ENCODE measurements at regions of chr18 and their contacts with region 1.

Region 1: GRCh38 chr18:59823596-59824195 is 76.1 kb upstream of the PMAIP1 start:
- DNase-seq: no peak
- ATAC-seq: peak; percentile 89

Region 2: DNA sequence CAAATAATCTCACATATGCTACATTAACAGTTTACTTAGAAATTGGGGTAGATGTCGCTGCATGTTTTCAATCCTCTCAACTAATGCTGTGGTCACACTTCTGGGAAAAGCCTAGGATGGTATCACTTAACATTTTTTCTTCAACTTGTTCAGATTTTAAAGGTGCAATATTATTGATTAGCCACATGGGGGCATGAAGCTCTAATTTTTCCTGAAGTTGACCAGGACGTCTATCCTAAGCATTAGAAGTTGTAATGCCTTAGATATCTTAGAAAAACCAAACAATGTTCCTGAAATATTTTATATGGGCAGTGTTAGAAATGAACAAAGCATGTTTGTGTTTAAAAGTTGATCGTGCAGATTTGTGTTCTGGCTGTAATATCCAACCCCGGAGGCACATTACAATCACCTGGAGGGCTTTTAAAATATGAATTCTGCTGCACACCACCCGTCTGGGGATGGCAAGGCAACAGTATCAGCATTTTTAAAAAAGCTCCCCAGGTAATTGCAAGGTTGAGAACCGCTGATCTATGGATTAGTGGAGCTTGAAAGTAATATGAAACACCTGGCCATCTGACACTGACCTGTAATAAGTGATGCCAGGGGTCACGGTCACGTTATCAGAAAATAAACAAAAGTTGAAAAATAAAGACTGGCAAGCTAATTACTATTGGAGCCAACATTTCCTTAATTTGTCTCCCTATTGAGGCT is 364.2 kb before region 1 on chr18:
- intact Hi-C with region 1: loop called (anchors 5 kb)
- DNase-seq: no peak
- ATAC-seq: peak; percentile 58

Region 3: GRCh38 chr18:59631583-59632181 is 192.0 kb before region 1 on chr18:
- intact Hi-C with region 1: loop called (anchors 10 kb)
- DNase-seq: no peak
- ATAC-seq: no peak